AG04449 (cell line): ENCODE measurements at regions of chr14 and their contacts with region 1.

Region 1: GRCh38 chr14:103391048-103391447 is 5.8 kb downstream of the MARK3 start:
- DNase-seq: no peak
- H3K4me3 ChIP-seq: no peak overlapping the region
- CTCF ChIP-seq: peak; percentile 19

Region 2: DNA sequence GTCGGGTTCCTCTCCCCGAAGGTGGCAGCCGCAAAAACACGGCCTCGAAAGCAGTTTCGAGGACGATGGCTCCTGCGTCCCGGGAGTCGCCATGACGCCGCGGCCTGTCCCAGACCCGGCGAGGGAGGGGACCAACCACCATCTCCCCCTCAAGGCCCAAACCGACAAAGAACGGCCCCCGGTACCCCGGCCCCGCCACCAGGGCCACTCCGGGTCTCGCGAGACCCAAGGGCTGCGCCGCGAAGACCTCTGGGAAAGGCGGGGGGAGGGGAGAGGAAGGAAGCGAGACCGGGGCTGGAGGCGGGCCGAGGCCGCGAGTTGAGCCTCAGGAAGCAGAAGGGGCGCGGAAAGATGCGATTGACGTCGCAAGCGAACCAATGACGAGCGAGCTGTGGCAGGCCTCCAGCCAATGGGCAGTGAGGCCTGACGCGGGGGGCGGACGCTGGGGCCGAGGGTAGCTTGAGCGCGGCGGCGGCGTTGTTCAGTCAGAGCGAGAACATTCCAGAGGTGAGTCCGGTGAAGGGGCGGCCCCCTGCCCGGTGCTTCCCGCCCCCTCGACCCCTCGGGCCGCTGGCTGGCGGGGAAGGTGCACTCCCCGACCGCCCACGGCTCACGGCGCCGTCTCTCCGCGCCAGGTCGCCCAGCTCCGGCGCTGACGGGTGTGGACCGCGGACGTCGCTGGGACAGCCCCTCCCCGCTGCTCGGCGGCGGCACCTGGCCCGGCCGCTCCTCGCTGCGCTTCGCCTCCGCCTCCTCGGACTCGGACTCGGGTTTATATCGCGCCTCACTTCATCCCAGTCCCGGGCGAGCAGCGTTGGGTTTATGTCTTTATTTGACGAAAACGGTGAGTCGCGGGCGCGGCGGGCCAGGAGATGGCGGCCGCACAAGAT is 57.0 kb before region 1 on chr14 and contains the start of gene EIF5:
- CTCF ChIA-PET with region 1: interaction called, 15 read pairs
- POLR2A ChIA-PET with region 1: interaction called, 7 read pairs
- DNase-seq: peak; percentile 89
- H3K4me3 ChIP-seq: peak within 1 kb of the TSS; percentile 88
- CTCF ChIP-seq: peak; percentile 12

Region 3: GRCh38 chr14:103361868-103362267 is 29.2 kb before region 1 on chr14:
- CTCF ChIA-PET with region 1: interaction called, 15 read pairs
- POLR2A ChIA-PET with region 1: no interaction called
- DNase-seq: peak; percentile 82
- H3K4me3 ChIP-seq: no peak overlapping the region
- CTCF ChIP-seq: no peak

Region 4: DNA sequence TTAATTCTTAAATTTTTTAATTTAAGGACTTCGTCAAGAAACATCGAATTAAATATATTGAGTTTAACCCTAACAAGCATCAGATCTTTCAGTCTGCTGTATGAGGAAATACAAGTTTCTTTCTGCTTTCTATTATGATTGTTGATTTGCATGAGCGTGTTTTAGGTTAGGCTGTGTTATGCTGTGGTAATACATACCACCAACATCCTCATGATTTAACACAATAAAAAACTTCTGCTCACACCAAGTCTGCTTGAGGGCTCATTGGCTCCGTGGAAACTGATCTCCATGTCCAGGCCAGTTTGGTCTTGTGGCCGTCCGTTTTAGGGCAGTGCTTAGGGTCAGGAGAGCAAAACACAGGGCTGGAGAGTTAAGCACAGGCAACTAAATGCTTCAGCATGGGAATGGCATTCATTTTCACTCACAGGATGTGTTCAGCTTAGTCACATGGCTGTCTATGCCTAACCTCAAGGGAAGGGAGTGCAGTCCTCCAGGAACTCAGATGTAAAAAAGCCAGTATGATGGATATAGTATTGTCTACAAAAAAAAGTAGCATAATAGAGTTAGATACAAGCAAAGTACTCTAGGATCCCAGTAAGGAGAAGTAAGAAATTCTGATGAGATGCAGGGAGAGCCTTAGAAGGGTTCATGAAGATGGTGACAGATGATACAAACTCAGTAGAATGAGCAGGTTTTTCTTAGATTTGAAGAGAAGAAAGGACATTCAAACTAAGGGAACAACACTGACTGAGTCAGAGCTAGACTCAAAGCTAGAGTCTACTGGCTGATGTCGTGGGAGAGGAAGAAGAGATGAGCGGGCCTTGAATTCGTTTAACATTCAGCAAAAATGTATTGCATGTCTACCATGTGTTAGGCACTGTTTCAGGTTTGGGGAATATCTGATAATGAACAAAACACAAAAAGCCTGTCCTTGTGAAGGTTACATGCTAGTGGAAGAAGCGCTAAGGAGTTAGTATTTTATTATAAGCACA is 10.5 kb after region 1 on chr14:
- CTCF ChIA-PET with region 1: interaction called, 78 read pairs
- POLR2A ChIA-PET with region 1: interaction called, 3 read pairs
- DNase-seq: no peak
- H3K4me3 ChIP-seq: peak overlapping the region; percentile 36
- CTCF ChIP-seq: no peak